ENCODE measurements at regions of chr11 and their contacts with region 1.

Region 1: GRCh38 chr11:84480131-84480530 is 1147.0 kb downstream of the DLG2 start:
- DNase-seq: no peak
- H3K4me3 ChIP-seq: no peak overlapping the region
- H3K27ac ChIP-seq: no peak overlapping the region
- H3K4me1 ChIP-seq: no peaks in the 10 kb centered on the region
- H3K27me3 ChIP-seq: no peaks in the 10 kb centered on the region
- CTCF ChIP-seq: no peak

Region 2: DNA sequence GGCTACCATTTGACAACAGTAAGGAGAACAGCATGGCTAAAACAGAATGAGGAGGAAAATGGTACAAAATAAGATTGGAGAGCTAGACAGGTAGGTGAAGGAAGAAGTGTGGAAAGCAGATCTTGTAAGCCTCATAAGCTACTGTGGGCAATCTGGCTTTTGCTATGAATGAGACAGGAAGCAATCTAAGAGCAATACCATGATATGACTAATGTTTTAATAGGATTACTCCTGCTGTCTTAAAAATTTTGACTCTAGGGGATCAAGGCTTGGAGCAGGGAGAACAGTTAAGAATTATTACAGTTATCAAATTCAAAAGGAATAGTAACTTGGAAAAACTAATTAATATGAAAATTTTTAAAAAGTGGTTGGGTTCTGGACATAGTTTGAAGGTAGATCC is 27.9 kb before region 1 on chr11:
- CTCF ChIA-PET with region 1: no interaction called
- dilution Hi-C with region 1: loop called (anchors 5 kb)
- in situ Hi-C with region 1: no loop called
- intact Hi-C with region 1: no loop called
- DNase-seq: no peak
- H3K4me3 ChIP-seq: no peak overlapping the region
- H3K27ac ChIP-seq: no peak overlapping the region
- H3K4me1 ChIP-seq: no peaks in the 10 kb centered on the region
- H3K27me3 ChIP-seq: no peaks in the 10 kb centered on the region
- CTCF ChIP-seq: no peak

Region 3: GRCh38 chr11:84573868-84574267 is 93.7 kb after region 1 on chr11:
- CTCF ChIA-PET with region 1: no interaction called
- dilution Hi-C with region 1: no loop called
- in situ Hi-C with region 1: no loop called
- intact Hi-C with region 1: no loop called
- DNase-seq: no peak
- H3K4me3 ChIP-seq: no peak overlapping the region
- H3K27ac ChIP-seq: no peak overlapping the region
- H3K4me1 ChIP-seq: no peaks in the 10 kb centered on the region
- H3K27me3 ChIP-seq: no peaks in the 10 kb centered on the region
- CTCF ChIP-seq: no peak

Measured in mammary epithelial cell (primary cell).